PC-3 (cell line): ENCODE measurements at regions of chr19 and their contacts with region 1.

Region 1: DNA sequence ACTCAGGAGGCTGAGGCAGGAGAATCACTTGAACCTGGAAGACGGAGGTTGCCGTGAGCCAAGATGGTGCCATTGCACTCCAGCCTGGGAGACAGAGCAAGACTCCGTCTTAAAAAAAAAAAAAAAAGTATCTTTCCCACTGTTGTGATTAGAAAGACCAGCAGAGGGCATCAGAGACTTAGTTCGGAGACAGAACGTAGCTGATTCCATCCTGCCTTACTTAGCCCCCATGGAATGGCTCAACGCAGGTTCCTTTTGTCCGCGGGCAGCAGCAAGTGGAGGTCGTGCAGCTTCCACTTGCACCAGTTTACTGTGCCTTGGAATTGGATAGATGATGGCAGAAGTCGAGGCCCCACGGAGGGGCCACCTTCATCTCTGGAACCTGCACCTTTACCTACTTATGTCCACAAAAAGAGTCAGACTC is 8.1 kb downstream of the TIMM29 start:
- DNase-seq: peak; percentile 94
- ATAC-seq: peak; percentile 52
- H3K4me3 ChIP-seq: peak overlapping the region; percentile 26; the same call in 1 of the 2 replicates
- H3K27ac ChIP-seq: no peak overlapping the region
- H3K4me1 ChIP-seq: peaks cover 18% of the 10 kb centered on the region
- H3K27me3 ChIP-seq: no peaks in the 10 kb centered on the region
- CTCF ChIP-seq: peak; percentile 73

Region 2: GRCh38 chr19:10960314-10961072 is 23.8 kb after region 1 on chr19 and contains the start of gene SMARCA4:
- CTCF ChIA-PET with region 1: interaction called, 6 read pairs
- POLR2A ChIA-PET with region 1: interaction called, 8 read pairs
- intact Hi-C with region 1: loop called (anchors 1 kb)
- DNase-seq: peak; percentile 99
- ATAC-seq: peak; percentile 84
- H3K4me3 ChIP-seq: peak within 1 kb of the TSS; percentile 82
- H3K27ac ChIP-seq: peak within 1 kb of the TSS; percentile 45
- H3K4me1 ChIP-seq: peaks cover 23% of the 10 kb centered on the region
- H3K27me3 ChIP-seq: no peaks in the 10 kb centered on the region
- CTCF ChIP-seq: no peak
- total RNA-seq, gene SMARCA4: 197 and 316 TPM in 2 replicates

Region 3: DNA sequence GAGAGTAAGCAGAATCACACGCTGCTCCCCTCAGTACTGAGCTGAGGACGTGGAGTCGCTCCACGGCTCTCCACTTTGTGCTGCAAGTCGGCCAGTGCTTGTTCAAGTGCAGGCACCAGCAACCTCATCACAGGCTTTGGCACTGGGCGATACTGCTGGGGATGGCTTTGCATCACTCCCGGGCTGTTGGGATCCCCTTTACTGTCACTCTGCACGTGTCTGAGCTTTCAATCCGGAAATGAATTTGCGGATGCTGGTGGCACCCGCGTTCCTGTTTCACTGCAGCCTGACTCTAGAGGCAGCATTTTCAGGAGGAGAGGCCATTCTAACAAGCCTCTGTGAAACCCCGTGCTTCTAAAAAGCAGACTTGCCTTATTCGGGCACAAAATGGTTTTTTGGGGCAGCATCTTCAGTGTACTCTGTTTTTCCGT is 43.3 kb after region 1 on chr19:
- CTCF ChIA-PET with region 1: no interaction called
- POLR2A ChIA-PET with region 1: no interaction called
- intact Hi-C with region 1: loop called (anchors 5 kb)
- DNase-seq: no peak
- ATAC-seq: no peak
- H3K4me3 ChIP-seq: no peak overlapping the region
- H3K27ac ChIP-seq: no peak overlapping the region
- H3K4me1 ChIP-seq: no peaks in the 10 kb centered on the region
- H3K27me3 ChIP-seq: no peaks in the 10 kb centered on the region
- CTCF ChIP-seq: no peak

Region 4: GRCh38 chr19:10995926-10996600 is 59.4 kb after region 1 on chr19:
- CTCF ChIA-PET with region 1: interaction called, 6 read pairs
- POLR2A ChIA-PET with region 1: interaction called, 11 read pairs
- intact Hi-C with region 1: no loop called
- DNase-seq: no peak
- ATAC-seq: no peak
- H3K4me3 ChIP-seq: no peak overlapping the region
- H3K27ac ChIP-seq: no peak overlapping the region
- H3K4me1 ChIP-seq: no peaks in the 10 kb centered on the region
- H3K27me3 ChIP-seq: no peaks in the 10 kb centered on the region
- CTCF ChIP-seq: no peak

Region 5: GRCh38 chr19:11090054-11090900 is 153.6 kb after region 1 on chr19:
- CTCF ChIA-PET with region 1: interaction called, 3 read pairs
- POLR2A ChIA-PET with region 1: no interaction called
- intact Hi-C with region 1: loop called (anchors 5 kb)
- DNase-seq: peak; percentile 98
- ATAC-seq: peak; percentile 72
- H3K4me3 ChIP-seq: peak overlapping the region; percentile 98
- H3K27ac ChIP-seq: peak overlapping the region; percentile 93
- H3K4me1 ChIP-seq: peaks cover 42% of the 10 kb centered on the region
- H3K27me3 ChIP-seq: no peaks in the 10 kb centered on the region
- CTCF ChIP-seq: 0 out of 2 replicates have a peak, but pooled peaks have one; percentile 23